ENCODE measurements at regions of chr9 and their contacts with region 1.

Region 1: GRCh38 chr9:99459919-99460318 is 237.8 kb downstream of the SEC61B start:
- DNase-seq: peak in 1 of 10 donors; percentile 75

Region 2: DNA sequence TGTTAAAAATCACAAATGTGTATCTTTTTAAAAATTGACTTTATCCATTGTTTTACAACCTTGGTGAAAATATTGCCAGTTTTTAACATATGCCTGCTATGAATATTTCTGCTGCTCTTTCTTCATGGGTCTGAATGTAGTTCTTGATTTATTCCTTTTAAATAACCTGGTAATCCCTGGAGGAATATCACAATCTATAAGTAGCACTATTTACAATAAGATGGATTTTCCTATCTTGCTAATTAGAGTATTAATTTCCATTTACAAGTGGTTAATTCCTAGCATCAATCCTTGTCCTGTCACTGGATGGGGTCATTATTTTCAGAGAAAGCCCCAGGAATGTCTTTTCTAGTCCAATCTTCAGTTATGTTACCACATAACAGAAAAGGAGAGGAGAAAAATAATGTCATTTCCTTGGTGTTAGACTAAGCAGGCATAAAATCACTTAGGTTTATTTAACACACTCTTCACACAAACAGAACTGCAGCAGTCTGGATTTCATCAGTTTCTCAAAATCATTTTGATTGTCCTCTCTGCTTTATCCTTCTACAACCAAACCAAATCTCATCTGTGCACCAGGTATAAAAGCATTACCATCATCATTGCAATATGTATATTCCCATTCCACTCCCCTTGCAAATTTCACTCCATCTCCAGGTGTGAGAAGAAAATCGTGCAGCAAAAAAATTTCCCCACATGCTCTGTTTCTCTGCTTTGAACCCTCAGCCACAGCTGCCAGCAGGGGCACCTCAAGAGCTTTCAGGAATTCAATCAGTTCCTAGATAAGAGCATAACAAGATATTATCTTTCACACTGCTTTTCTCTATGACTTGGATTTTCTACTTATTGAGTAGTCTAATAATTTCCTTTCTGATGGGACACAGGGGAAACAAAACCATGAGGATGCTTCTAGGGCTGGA is 33.7 kb before region 1 on chr9:
- intact Hi-C with region 1: no loop called
- DNase-seq: no peak

Region 3: DNA sequence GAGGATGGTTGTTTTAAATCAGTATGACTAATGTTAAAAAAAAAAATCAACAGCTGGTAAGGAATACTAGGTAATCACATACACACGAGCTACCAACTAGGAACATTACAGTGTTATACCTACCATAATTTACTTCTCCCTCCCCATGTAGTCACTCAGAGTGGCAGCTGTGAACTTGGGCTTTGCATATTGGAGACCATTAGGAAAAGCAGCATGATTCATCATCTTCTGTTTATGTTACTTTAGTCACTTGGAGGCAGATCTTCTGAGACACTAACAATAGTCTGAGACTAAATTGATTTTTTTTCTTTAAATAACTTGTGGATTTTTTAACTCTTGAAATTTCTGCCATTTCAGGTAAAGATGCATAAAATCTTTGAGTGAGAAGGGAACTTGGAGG is 220.3 kb after region 1 on chr9:
- intact Hi-C with region 1: loop called (anchors 5 kb)
- DNase-seq: no peak

Region 4: DNA sequence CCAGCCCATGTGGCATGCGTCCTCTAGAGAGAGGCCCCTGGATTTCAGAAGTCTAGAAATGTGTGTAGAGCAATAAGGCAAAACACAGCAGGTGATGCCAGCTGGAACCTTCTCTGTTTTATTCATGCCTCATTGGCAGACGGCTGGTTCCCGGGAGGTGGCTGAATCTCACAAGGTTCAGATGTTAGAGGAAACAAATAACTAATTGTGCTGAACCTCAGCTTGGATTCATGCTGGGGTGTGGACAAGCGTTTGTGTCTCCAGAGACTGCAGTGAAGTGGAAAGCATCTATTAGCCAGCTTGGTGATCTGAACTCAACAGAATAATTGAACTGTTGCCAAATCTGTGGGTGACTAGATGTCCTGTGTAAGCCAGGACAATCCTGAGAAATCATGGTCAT is 230.7 kb after region 1 on chr9:
- intact Hi-C with region 1: no loop called
- DNase-seq: peak in 7 of 10 donors; percentile 5 to 77 (median 16)